ENCODE measurements at regions of chr12 and their contacts with region 1.

Region 1: DNA sequence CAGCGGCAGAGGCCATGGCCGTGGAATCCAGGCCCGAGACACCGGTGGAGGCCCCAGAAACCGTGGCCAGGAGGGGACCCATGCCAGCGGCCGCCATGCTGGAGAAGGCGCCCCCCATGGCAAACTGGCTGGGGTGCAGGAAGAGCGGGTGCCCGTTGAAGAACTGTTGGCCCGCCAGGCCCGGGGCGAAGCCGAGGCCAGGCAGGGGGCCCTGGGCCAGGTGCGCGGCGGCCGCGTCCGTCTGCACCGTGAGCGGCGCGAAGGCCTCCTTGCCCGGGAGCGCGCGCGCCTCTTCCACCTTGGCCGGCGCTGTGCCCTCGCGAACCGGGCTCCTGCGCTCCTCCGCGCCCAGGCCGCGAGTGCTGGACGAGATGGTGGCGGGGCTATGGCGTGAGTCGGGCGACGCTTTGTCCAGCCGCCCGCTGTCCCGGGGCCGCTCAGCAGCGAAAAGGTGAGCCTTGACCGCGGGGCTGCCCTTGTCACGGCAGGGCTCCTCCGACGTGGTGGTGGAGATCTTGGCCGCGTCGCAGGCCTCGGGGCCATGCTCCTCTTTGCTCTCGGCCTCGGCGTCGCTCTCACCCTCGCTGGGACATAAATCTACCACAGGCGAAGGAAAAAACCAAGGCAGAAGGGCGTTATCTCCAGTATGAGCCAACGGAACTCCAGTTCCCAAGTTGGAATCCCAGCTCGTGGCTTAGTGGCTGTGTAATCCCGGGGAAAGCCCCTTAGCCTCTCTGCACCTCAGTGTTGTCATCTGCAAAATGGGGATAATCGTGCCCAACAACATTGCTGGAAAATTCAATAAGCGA is 9.5 kb downstream of the TBX3 start:
- DNase-seq: no peak
- ATAC-seq: no peak
- H3K4me3 ChIP-seq: no peak overlapping the region
- H3K27ac ChIP-seq: no peak overlapping the region
- H3K4me1 ChIP-seq: peaks cover 14% of the 10 kb centered on the region; the same call in 2 of the 3 replicates
- CTCF ChIP-seq: no peak
- EP300 ChIP-seq: no peak
- POLR2A ChIP-seq: no peak
- RAD21 ChIP-seq: no peak

Region 2: DNA sequence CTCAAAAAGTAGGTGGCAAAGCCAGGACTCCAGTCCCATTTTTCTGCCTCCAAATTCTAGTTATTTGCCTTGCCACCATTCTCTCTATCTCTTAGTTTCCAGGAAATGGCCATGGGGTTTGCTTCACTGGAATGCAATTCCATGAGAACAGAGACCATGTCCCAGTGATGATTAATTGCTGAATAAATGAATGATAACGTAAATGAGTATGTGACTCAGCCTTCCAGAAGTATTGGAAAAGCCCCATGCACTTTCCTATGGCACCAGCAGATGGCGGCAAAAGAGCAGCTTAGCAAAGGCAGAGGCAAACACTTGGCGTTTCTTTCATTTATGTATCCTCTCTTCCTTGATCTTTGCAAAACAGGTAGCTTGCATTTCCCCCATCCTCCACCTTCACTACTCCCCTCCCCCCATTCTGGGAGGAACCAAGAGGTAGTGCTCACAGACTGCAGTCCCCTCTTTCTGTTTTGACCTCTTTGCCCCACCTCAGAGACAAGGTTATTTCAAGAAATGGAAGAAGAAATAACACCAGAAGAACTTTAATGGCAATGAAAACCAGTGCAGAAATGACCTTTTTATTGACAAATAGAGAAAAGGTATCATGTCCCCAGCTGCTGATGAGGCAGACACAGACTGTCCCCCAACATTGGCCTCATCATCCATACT is 11.8 kb before region 1 on chr12:
- CTCF ChIA-PET with region 1: interaction called, 20 read pairs
- POLR2A ChIA-PET with region 1: no interaction called
- DNase-seq: peak; percentile 76 to 90
- ATAC-seq: peak; percentile 73 to 79
- H3K4me3 ChIP-seq: no peak overlapping the region
- H3K27ac ChIP-seq: peak overlapping the region; percentile 83 to 85
- H3K4me1 ChIP-seq: peaks cover 38% of the 10 kb centered on the region
- CTCF ChIP-seq: peak; percentile 95
- EP300 ChIP-seq: peak; percentile 52 to 54; a peak in 3 of 5 replicates
- POLR2A ChIP-seq: no peak
- RAD21 ChIP-seq: peak; percentile 97 to 99